ENCODE measurements at regions of chr22 and their contacts with region 1.

Region 1: DNA sequence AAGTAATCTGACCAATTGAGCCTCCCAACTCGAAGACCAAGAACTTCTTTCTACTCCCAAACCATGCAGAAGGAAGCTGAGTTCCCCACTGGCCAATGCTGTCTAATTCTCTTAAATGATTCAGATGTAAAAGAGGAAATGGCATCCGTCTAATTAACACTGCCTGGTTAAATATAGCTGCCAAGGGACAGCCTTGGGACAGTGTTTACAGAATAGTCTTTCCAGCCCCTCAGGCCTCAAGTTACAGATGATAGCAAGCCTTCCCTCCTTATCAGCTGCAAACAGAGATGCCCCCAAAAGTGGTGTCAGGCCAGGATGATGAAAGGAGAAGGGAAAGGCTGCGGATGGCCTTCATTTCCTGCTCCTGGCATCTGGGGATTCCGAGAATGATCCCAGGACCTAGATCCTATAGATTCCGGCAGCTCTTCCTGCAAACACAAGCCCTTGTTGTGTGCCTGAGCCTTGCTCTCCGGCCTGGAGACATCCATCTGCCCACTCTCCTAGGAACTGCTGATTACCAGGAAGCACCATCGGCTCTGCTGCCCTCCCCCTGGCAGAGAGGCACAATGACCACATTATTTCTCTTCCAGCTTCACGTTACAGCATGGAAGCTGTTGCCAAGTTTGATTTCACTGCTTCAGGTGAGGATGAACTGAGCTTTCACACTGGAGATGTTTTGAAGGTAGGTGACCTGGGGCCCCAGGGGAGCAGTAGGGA is 13.5 kb upstream of the TMA7B start:
- DNase-seq: no peak
- ATAC-seq: peak; percentile 27
- H3K4me3 Mint-ChIP-seq: peak overlapping the region; percentile 50
- H3K27ac Mint-ChIP-seq: peak overlapping the region; percentile 89
- H3K4me1 Mint-ChIP-seq: peaks cover 96% of the 10 kb centered on the region
- H3K27me3 Mint-ChIP-seq: no peaks in the 10 kb centered on the region

Region 2: DNA sequence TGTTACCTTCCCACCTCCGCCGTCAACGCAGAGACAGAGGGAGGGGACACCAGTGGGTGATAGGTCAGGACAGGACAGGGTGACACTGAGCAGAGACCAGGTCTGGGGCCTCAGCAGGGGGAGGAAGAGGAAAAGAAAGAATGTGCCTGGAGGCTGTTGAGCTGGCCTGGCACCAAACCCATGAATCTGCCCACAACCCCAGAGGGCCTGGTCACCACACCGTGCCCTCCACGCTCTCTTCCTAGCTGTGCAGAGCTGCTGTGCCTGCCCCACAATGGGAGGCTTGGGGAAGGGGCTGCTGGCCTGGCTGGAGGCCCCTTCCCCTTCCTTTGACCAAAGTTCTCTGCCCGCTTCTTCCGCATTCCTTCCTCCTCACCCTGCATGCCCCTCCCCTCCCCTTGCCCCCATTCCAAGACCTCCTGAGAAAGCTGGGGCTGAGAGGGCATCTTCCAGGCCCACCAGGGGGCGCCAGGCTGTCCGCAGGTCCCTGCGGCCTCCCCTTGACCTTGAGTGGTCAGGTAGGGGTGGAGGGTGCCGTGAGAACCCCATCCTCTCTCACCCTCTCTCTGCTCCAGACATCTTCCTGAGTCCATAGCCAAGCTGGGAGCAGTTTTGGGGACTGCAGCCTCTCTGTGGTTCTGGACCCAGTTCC is 387.1 kb before region 1 on chr22:
- CTCF ChIA-PET with region 1: interaction called, 3 read pairs
- POLR2A ChIA-PET with region 1: no interaction called
- intact Hi-C with region 1: loop called in 1 of 2 experiments (anchors 5 kb)
- DNase-seq: peak; percentile 44
- ATAC-seq: no peak
- H3K4me3 Mint-ChIP-seq: no peak overlapping the region
- H3K27ac Mint-ChIP-seq: no peak overlapping the region
- H3K4me1 Mint-ChIP-seq: peaks cover 2% of the 10 kb centered on the region
- H3K27me3 Mint-ChIP-seq: peaks cover 19% of the 10 kb centered on the region

Region 3: DNA sequence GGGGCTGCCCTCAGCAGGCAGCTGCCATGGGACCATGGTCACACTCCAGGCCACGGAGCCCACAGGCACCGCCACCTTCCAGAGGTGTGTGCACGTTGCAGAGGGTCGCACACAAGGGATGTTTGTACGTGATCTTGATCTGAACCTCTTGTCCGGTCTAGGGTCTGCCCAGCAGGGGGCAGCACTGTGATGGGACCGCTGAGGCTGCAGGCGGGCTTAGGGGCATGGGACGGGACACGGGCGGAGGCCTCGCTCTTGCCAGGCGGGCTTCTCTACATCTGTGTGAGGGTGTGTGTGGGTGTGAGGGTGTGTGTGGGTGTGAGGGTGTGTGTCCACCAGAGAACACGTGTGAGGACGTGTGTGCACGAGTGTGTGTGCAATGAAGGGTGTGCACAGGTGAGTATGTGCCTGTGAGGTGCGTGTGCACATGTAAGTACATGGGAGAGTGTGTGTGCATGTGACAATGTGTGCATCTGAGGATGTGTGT is 323.7 kb before region 1 on chr22:
- CTCF ChIA-PET with region 1: no interaction called
- POLR2A ChIA-PET with region 1: no interaction called
- intact Hi-C with region 1: loop called (anchors 5 kb)
- DNase-seq: peak; percentile 84
- ATAC-seq: peak; percentile 76
- H3K4me3 Mint-ChIP-seq: no peak overlapping the region
- H3K27ac Mint-ChIP-seq: no peak overlapping the region
- H3K4me1 Mint-ChIP-seq: peaks cover 12% of the 10 kb centered on the region
- H3K27me3 Mint-ChIP-seq: peaks cover 3% of the 10 kb centered on the region

Region 4: DNA sequence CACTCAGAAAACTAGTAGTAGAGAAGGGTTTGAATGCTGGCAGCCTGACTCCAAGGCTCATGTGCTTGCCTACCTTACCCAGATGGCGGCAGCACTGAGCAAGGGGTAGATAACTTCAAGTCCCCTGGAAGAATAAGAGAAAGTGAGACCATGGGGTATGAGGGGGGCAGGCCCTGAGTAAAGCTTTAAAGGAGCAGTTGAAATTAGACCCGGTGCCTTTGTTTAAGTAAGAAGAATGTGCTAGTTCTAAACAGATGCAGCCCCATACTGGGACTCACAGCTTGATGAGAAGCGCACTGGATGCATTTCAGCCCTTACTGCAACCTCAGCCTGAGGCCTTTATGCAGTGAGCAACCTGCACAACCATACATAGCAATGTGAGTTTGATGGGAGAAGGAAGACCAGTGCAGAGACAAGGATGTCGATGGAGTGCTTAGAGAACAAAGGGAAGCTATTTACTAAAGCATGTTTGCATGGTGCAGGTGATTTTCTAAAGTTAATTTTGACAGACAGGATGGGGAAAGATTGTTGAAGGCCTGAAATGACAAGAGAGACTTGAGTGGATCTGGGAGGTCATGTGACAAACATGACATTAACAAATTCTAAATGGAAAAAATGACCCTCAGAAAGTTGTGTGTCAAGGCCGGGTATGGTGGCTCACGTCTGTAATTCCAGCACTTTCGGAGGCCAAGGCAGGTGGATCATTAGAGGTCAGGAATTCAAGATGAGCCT is 13.6 kb before region 1 on chr22:
- CTCF ChIA-PET with region 1: interaction called, 25 read pairs
- POLR2A ChIA-PET with region 1: interaction called, 3 read pairs
- intact Hi-C with region 1: no loop called
- DNase-seq: peak; percentile 83
- ATAC-seq: peak; percentile 35
- H3K4me3 Mint-ChIP-seq: peak overlapping the region; percentile 69
- H3K27ac Mint-ChIP-seq: peak overlapping the region; percentile 92
- H3K4me1 Mint-ChIP-seq: peaks cover 54% of the 10 kb centered on the region
- H3K27me3 Mint-ChIP-seq: no peaks in the 10 kb centered on the region

Region 5: GRCh38 chr22:40107851-40108378 is 161.3 kb after region 1 on chr22:
- CTCF ChIA-PET with region 1: no interaction called
- POLR2A ChIA-PET with region 1: no interaction called
- intact Hi-C with region 1: no loop called
- DNase-seq: peak; percentile 65
- ATAC-seq: peak; percentile 88
- H3K4me3 Mint-ChIP-seq: peak overlapping the region; percentile 68
- H3K27ac Mint-ChIP-seq: peak overlapping the region; percentile 91
- H3K4me1 Mint-ChIP-seq: peaks cover 80% of the 10 kb centered on the region
- H3K27me3 Mint-ChIP-seq: no peaks in the 10 kb centered on the region

Measured in activated CD4-positive, alpha-beta T cell treated with anti-CD3 and anti-CD28 coated beads for 36 hours (primary cell).